ENCODE measurements at regions of chr6 and their contacts with region 1.

Region 1: GRCh38 chr6:149324428-149324827 is 6.9 kb downstream of the TAB2 start:
- DNase-seq: no peak
- ATAC-seq: peak; percentile 39 to 48
- H3K4me3 ChIP-seq: no peak overlapping the region
- H3K27ac ChIP-seq: peak overlapping the region; percentile 3
- H3K4me1 ChIP-seq: peaks cover 11% of the 10 kb centered on the region
- H3K27me3 ChIP-seq: no peaks in the 10 kb centered on the region

Region 2: GRCh38 chr6:149043476-149044130 is 280.8 kb before region 1 on chr6:
- intact Hi-C with region 1: no loop called
- DNase-seq: peak in 1 of 3 donors; percentile 55
- ATAC-seq: no peak
- H3K4me3 ChIP-seq: no peak overlapping the region
- H3K27ac ChIP-seq: no peak overlapping the region
- H3K4me1 ChIP-seq: peaks cover 3% of the 10 kb centered on the region
- H3K27me3 ChIP-seq: no peaks in the 10 kb centered on the region

Region 3: DNA sequence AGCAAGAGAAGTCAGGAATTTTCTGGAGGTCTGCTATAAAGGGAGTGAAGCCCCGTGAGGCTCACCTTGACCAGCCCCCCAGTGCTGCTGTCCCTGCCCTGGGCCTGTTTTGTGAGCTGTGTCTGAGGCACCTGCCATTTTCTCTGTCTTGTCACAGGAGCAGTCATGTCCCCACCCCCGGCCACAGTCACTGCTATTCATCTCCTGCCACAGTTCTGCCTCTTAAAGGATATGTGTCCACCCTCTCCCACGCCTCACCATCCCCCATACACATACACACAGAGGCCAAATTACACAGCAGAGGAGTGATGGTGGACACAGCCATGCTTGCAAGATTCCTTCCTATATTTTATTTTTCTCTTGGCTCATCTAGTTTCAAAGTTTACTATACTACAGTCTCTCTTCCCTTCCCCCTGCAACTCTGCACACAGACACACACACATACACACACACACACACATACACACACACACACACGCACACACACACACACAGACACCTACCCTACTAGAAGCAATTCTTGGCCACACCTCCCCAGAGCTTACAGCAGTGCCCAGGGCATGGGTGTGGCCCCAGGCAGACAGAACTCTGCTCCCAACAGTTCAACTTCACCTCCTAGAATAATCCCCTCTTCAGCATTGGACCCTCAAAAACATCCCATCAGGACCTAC is 75.6 kb before region 1 on chr6:
- intact Hi-C with region 1: no loop called
- DNase-seq: no peak
- ATAC-seq: peak in 1 of 2 donors; percentile 66
- H3K4me3 ChIP-seq: no peak overlapping the region
- H3K27ac ChIP-seq: no peak overlapping the region
- H3K4me1 ChIP-seq: no peaks in the 10 kb centered on the region
- H3K27me3 ChIP-seq: no peaks in the 10 kb centered on the region

Region 4: DNA sequence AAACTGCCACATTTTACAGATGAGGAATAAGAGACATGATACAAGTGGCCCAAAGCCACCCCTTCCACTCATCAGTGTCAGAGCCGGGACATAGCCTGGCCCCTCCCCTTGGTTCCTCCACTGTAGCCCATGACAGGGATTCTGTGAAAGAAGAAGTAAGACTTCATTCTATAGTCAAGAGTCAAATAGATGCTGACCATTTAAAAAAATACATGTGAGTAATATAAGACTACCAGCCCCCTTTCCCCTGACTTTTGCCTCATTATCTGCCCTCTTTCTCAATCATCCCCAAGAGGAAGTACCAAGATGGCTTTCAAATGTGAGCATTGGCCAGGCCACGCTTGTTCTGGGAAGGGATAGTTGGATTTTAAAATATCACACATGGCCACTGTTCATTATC is 64.7 kb before region 1 on chr6:
- intact Hi-C with region 1: no loop called
- DNase-seq: peak in 2 of 3 donors; percentile 67 to 69
- ATAC-seq: peak; percentile 64 to 78
- H3K4me3 ChIP-seq: no peak overlapping the region
- H3K27ac ChIP-seq: no peak overlapping the region
- H3K4me1 ChIP-seq: peaks cover 2% of the 10 kb centered on the region
- H3K27me3 ChIP-seq: no peaks in the 10 kb centered on the region

Region 5: DNA sequence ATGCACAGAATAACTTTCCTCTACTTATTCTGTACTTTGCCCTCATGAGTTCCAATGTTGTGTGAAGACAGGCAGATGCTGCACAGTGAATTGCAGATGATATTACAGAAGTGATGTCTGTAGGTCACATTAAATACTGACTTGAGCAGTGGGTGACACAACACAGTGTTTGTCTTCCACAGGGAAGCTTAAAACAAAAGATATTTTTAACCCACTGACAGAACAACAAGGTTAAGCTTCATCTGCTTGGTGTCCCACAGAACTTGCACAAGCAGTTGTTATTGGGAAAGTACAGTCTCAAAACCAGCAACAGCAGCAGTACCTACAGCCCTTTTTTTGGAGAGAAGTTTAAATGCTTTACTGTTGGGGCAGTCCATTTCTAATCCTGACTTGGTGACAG is 86.1 kb after region 1 on chr6:
- intact Hi-C with region 1: loop called in 1 of 4 experiments (anchors 10 kb)
- DNase-seq: no peak
- ATAC-seq: peak in 1 of 2 donors; percentile 43
- H3K4me3 ChIP-seq: no peak overlapping the region
- H3K27ac ChIP-seq: no peak overlapping the region
- H3K4me1 ChIP-seq: no peaks in the 10 kb centered on the region
- H3K27me3 ChIP-seq: no peaks in the 10 kb centered on the region